AG04450 (cell line): ENCODE measurements at regions of chr5 and their contacts with region 1.

Region 1: DNA sequence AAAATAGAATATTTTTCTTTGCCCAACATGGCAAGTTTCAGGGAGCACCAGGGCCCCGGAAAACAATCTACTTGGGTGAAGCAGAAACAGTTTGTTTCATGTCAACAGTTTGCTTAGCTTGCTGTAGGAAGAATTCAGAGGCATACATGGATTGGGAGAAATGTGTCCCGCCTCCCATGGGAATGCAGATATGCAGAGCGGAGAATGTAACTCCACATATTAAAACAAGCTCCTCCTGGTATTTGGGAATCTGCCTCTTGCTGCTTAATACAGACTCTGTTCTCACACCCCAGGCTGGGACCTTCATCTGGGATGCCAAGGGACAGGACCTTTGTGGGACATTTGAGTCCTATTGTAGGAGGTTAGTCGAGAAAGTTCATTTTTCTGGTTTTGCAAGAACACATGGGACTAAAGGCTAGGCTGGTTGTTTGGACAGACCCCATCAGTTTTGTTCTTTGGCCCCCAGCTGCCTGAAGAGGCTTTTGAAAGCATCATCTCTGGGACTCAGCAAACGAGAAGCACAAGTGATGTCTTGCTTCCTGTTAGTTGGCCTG is 220.5 kb upstream of the ADRA1B start:
- DNase-seq: no peak
- H3K4me3 ChIP-seq: no peak overlapping the region
- H3K27ac ChIP-seq: no peak overlapping the region
- H3K27me3 ChIP-seq: peaks cover 4% of the 10 kb centered on the region
- CTCF ChIP-seq: no peak

Region 2: GRCh38 chr5:158875272-158875679 is 820.5 kb before region 1 on chr5:
- CTCF ChIA-PET with region 1: no interaction called
- POLR2A ChIA-PET with region 1: no interaction called
- DNase-seq: no peak
- H3K4me3 ChIP-seq: no peak overlapping the region
- H3K27ac ChIP-seq: no peak overlapping the region
- H3K27me3 ChIP-seq: peaks cover 3% of the 10 kb centered on the region
- CTCF ChIP-seq: no peak

Region 3: GRCh38 chr5:159331093-159331973 is 364.5 kb before region 1 on chr5:
- CTCF ChIA-PET with region 1: interaction called, 15 read pairs
- POLR2A ChIA-PET with region 1: no interaction called
- DNase-seq: no peak
- H3K4me3 ChIP-seq: peak overlapping the region; percentile 49
- H3K27ac ChIP-seq: no peak overlapping the region
- H3K27me3 ChIP-seq: no peaks in the 10 kb centered on the region
- CTCF ChIP-seq: peak; percentile 70

Region 4: GRCh38 chr5:159727167-159727566 is 31.3 kb after region 1 on chr5:
- CTCF ChIA-PET with region 1: interaction called, 11 read pairs
- POLR2A ChIA-PET with region 1: no interaction called
- DNase-seq: no peak
- H3K4me3 ChIP-seq: no peak overlapping the region
- H3K27ac ChIP-seq: no peak overlapping the region
- H3K27me3 ChIP-seq: no peaks in the 10 kb centered on the region
- CTCF ChIP-seq: no peak

Region 5: DNA sequence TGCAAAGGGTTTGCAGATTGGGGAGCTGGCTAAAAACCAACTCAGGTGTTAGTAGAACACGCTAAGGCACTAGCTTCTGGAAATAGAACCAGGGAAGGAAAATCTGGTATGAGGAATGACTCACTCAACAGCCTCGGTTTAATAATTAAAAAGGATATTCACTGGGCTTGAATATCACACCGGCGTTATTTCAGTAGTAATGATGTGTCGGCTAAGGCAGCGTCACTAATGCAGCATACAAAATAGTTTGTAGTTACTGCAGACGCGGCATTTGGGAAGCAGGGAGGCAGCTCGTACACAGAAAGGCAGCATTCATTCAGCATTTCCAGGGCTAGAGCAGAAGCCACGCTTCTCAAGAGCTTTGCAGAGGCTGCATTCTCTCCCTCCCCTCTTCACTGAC is 222.2 kb after region 1 on chr5:
- CTCF ChIA-PET with region 1: no interaction called
- POLR2A ChIA-PET with region 1: no interaction called
- DNase-seq: no peak
- H3K4me3 ChIP-seq: no peak overlapping the region
- H3K27ac ChIP-seq: no peak overlapping the region
- H3K27me3 ChIP-seq: no peaks in the 10 kb centered on the region
- CTCF ChIP-seq: no peak